Calu3 (cell line): ENCODE measurements at regions of chr6 and their contacts with region 1.

Region 1: DNA sequence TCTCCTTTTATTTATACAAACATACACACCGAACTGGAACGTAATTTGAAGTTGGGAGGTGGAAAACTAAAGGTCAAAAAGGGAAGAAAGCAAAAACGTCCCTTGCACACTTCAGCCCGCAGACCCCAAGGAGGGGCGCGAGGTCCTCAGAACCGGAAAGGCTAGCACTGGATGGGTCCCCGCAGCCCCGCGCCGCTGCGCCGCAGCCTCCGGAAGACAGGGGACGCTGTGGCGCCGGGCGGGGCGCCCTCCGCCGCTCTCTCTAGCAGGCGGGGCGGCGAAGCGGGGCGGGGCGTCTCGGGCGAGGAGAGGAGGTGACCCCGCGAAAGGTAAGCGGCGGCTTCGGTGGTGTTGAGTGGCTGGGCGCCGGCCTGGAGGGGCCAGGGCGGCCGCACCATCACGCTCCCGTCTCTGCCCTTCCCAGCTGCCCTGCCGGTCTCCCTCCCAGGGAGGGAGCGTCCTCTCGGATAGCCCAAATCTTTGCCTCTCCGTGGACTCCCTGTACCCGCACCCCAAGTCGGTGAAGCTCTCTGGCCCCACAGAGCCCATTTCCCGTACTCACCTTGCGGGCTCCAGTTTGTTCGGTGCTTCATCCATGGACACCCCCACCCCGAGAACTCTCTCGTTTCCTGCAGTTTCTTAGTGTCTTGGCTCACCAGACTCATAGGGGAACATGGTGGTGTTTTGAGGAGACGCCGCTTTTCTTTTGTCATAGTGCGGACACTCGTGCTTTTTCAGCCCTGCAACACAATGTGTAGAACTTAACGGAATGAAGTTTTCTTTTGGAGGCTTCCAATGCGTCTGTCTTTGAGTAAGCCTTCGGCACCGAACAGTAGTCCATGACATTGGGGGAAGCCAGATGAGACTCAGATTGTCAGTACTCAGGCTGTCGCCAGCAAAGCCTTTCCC is at the start of gene SMIM8:
- DNase-seq: peak; percentile 91
- H3K4me3 Mint-ChIP-seq: peak within 1 kb of the TSS; percentile 96
- H3K27ac Mint-ChIP-seq: peak within 1 kb of the TSS; percentile 87
- H3K4me1 Mint-ChIP-seq: peaks cover 8% of the 10 kb centered on the region
- H3K27me3 Mint-ChIP-seq: no peaks in the 10 kb centered on the region
- CTCF ChIP-seq: peak; percentile 94
- total RNA-seq, gene SMIM8: 15.1 and 19.0 TPM in 2 replicates

Region 2: DNA sequence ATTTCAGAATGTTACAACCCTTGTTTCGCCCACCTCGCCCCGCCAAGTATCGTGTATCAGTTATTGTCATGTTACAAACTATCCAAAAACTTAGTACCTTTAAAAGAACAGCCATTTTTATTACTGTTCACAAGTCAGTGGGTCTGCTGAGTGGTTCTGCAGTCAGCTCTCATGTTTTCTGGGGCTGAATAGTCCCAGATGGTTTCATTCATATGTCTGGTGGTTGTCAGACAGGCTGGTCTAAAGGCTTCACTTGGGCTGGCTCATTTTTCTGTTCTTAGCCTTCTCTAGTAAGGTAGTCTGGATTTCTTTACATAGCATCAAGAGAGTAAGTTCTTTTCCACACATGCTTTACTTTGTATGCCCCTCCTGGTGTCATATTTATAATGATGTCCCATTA is 158.6 kb before region 1 on chr6:
- CTCF ChIA-PET with region 1: no interaction called
- intact Hi-C with region 1: no loop called
- DNase-seq: no peak
- H3K4me3 Mint-ChIP-seq: no peak overlapping the region
- H3K27ac Mint-ChIP-seq: no peak overlapping the region
- H3K4me1 Mint-ChIP-seq: peaks cover 40% of the 10 kb centered on the region
- H3K27me3 Mint-ChIP-seq: no peaks in the 10 kb centered on the region
- CTCF ChIP-seq: no peak

Region 3: DNA sequence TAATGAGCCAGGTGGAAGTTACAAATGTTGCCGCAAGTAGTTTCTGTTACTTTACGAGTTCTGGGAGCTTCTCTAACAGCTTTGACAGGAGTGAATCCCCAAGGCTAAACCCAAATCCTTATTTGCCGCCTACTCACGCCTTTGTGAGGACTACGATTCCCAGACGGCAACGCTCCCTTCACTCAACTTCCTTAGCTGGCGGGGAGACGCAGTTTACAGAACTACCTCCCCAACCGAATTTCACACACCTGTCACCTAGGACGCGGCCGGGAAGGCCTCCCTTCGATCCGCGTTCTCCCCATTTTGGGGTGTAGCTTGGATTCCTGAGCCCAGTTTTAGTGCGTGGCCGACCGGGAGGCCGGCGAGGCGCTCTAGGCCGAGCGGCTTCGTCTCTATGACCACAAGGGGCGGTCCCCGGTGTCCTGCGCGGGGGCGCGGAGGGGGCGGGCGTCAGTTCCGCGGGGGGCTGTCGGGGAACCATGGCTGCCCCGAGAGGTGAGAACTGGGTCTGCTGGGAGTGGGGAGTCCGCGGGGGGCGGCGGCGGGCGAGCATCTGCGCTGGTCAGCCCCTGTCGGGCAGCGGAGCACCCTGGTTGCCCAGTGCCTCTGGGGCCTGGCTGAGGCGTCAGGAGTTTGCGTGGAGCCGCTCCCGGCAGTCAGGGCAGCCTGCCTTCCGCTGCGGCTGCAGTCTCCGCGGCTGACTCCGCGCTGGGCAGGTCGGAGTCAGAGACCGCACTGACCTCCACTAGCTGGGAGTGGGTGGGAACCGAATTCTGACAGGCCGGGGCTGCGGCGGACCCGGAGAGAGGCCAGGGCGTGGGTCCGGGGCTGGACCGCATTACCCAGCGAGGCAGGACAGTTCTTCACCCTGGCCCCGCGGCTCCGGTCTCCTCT is 150.2 kb after region 1 on chr6 and contains the start of gene SLC35A1:
- CTCF ChIA-PET with region 1: no interaction called
- intact Hi-C with region 1: loop called (anchors 5 kb)
- DNase-seq: peak; percentile 87
- H3K4me3 Mint-ChIP-seq: peak within 1 kb of the TSS; percentile 87
- H3K27ac Mint-ChIP-seq: peak within 1 kb of the TSS; percentile 78
- H3K4me1 Mint-ChIP-seq: peaks cover 10% of the 10 kb centered on the region
- H3K27me3 Mint-ChIP-seq: peaks cover 7% of the 10 kb centered on the region
- CTCF ChIP-seq: peak; percentile 19
- total RNA-seq, gene SLC35A1: 17.5 and 19.4 TPM in 2 replicates

Region 4: GRCh38 chr6:87574292-87574691 is 251.7 kb after region 1 on chr6:
- CTCF ChIA-PET with region 1: no interaction called
- intact Hi-C with region 1: no loop called
- DNase-seq: no peak
- H3K4me3 Mint-ChIP-seq: no peak overlapping the region
- H3K27ac Mint-ChIP-seq: no peak overlapping the region
- H3K4me1 Mint-ChIP-seq: peaks cover 24% of the 10 kb centered on the region
- H3K27me3 Mint-ChIP-seq: no peaks in the 10 kb centered on the region
- CTCF ChIP-seq: no peak